ENCODE measurements at regions of chr5 and their contacts with region 1.

Region 1: GRCh38 chr5:80255732-80256479 is at the start of gene SERINC5:
- DNase-seq: peak; percentile 92
- ATAC-seq: peak; percentile 75
- H3K4me3 Mint-ChIP-seq: peak within 1 kb of the TSS; percentile 93
- H3K27ac Mint-ChIP-seq: peak within 1 kb of the TSS; percentile 97
- H3K4me1 Mint-ChIP-seq: peaks cover 42% of the 10 kb centered on the region
- H3K27me3 Mint-ChIP-seq: no peaks in the 10 kb centered on the region
- total RNA-seq, gene SERINC5: 28.1 to 36.0 TPM

Region 2: GRCh38 chr5:80093796-80094195 is 162.1 kb before region 1 on chr5:
- CTCF ChIA-PET with region 1: interaction called, 27 read pairs
- POLR2A ChIA-PET with region 1: interaction called, 3 read pairs
- intact Hi-C with region 1: no loop called
- DNase-seq: no peak
- ATAC-seq: no peak
- H3K4me3 Mint-ChIP-seq: no peak overlapping the region
- H3K27ac Mint-ChIP-seq: peak overlapping the region; percentile 39
- H3K4me1 Mint-ChIP-seq: peaks cover 23% of the 10 kb centered on the region
- H3K27me3 Mint-ChIP-seq: no peaks in the 10 kb centered on the region

Region 3: GRCh38 chr5:80181618-80182211 is 74.2 kb before region 1 on chr5:
- CTCF ChIA-PET with region 1: no interaction called
- POLR2A ChIA-PET with region 1: interaction called, 4 read pairs
- intact Hi-C with region 1: loop called in 1 of 2 experiments (anchors 2 kb)
- DNase-seq: peak; percentile 59
- ATAC-seq: peak; percentile 43
- H3K4me3 Mint-ChIP-seq: no peak overlapping the region
- H3K27ac Mint-ChIP-seq: peak overlapping the region; percentile 89
- H3K4me1 Mint-ChIP-seq: peaks cover 81% of the 10 kb centered on the region
- H3K27me3 Mint-ChIP-seq: no peaks in the 10 kb centered on the region

Region 4: GRCh38 chr5:80231243-80231642 is 24.7 kb before region 1 on chr5:
- CTCF ChIA-PET with region 1: interaction called, 3 read pairs
- POLR2A ChIA-PET with region 1: interaction called, 10 read pairs
- intact Hi-C with region 1: loop called in 1 of 2 experiments (anchors 2 kb)
- DNase-seq: no peak
- ATAC-seq: peak; percentile 34
- H3K4me3 Mint-ChIP-seq: no peak overlapping the region
- H3K27ac Mint-ChIP-seq: peak overlapping the region; percentile 53
- H3K4me1 Mint-ChIP-seq: peaks cover 71% of the 10 kb centered on the region
- H3K27me3 Mint-ChIP-seq: no peaks in the 10 kb centered on the region

Region 5: GRCh38 chr5:80308526-80308925 is 52.6 kb after region 1 on chr5:
- CTCF ChIA-PET with region 1: interaction called, 4 read pairs
- POLR2A ChIA-PET with region 1: no interaction called
- intact Hi-C with region 1: loop called in 1 of 2 experiments (anchors 2 kb)
- DNase-seq: no peak
- ATAC-seq: no peak
- H3K4me3 Mint-ChIP-seq: no peak overlapping the region
- H3K27ac Mint-ChIP-seq: no peak overlapping the region
- H3K4me1 Mint-ChIP-seq: no peaks in the 10 kb centered on the region
- H3K27me3 Mint-ChIP-seq: no peaks in the 10 kb centered on the region

Region 6: GRCh38 chr5:81014348-81014747 is 758.4 kb after region 1 on chr5:
- CTCF ChIA-PET with region 1: interaction called, 3 read pairs
- POLR2A ChIA-PET with region 1: no interaction called
- intact Hi-C with region 1: loop called in 1 of 2 experiments (anchors 10 kb)
- DNase-seq: peak; percentile 35
- ATAC-seq: no peak
- H3K4me3 Mint-ChIP-seq: no peak overlapping the region
- H3K27ac Mint-ChIP-seq: no peak overlapping the region
- H3K4me1 Mint-ChIP-seq: peaks cover 76% of the 10 kb centered on the region
- H3K27me3 Mint-ChIP-seq: no peaks in the 10 kb centered on the region